ACHN (cell line): ENCODE measurements at regions of chr3 and their contacts with region 1.

Region 1: DNA sequence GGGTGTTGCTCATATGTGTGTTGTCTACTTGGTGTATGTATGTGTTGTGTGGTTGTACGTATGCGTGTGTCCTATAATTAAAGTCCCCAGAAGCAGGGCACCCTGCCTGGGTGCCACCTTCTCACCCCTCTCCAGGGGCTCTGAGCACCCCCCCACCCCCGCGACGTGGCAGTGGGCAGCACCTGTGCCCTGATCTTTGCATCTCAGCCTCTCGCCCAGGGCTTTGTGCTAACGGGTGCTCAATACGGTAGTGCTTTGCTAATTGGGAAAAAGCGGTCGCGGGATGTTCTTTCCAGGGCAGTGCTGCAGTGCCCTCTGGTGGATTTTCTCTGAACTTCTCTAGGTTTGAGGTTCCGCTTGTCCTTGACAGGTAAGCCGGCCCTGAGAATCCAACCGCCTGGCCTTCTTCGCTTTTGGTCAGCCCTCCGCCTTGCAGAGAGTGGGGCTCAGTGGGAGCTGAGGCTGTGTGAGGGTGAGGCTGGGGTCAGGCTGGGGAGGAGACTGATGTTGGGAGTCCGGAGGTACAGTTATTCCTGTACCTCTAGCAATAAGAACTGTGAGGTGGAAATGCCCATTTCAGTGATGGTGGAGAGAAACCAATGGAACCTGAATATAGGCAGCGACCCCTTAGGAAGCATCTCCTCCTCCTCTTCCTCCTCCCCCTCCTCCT is 17.6 kb upstream of the EPHB3 start:
- DNase-seq: peak; percentile 83

Region 2: DNA sequence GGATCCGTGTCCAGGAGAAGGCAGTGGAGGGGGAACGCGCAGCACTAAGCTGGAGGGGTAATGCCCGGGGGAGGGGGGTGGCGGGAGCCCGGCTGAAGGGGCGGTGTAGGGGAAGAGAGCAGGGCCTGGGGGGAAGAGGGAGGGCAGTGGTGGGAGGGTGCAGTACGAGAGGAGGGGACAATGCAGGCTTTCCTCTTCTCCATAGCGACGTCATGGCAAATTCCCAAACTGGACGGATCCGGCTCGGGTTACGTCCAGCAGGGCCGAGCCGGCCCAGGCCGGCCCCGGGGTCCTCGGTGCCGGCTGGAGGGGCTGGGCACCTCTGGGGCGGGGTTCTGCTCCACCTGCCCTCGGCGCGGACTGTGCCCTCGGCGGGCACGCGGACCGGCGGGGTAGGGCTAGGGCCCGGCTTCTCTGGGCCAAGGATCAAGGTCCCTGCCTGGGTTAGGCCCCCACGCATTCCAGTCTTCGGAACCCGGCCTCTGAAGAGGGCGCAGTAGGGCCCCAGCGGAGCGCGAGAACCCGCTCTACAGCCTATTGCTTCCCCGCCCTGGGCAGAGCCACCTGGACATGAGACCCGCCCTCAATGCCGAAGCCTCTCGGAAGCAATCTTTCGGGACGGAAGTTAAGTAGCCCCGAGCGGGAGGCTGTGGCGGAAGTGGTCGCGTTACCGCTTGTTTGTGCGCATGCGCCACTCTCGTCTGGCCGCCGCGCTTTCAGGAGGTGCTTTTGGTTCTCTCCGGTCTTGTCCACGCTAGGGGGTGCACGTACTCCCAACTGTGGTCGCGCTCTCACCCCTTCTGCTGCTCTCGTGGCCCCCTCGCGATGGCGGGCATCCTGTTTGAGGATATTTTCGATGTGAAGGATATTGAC is 181.1 kb before region 1 on chr3:
- in situ Hi-C with region 1: loop called (anchors 25 kb)
- DNase-seq: peak; percentile 95

Region 3: DNA sequence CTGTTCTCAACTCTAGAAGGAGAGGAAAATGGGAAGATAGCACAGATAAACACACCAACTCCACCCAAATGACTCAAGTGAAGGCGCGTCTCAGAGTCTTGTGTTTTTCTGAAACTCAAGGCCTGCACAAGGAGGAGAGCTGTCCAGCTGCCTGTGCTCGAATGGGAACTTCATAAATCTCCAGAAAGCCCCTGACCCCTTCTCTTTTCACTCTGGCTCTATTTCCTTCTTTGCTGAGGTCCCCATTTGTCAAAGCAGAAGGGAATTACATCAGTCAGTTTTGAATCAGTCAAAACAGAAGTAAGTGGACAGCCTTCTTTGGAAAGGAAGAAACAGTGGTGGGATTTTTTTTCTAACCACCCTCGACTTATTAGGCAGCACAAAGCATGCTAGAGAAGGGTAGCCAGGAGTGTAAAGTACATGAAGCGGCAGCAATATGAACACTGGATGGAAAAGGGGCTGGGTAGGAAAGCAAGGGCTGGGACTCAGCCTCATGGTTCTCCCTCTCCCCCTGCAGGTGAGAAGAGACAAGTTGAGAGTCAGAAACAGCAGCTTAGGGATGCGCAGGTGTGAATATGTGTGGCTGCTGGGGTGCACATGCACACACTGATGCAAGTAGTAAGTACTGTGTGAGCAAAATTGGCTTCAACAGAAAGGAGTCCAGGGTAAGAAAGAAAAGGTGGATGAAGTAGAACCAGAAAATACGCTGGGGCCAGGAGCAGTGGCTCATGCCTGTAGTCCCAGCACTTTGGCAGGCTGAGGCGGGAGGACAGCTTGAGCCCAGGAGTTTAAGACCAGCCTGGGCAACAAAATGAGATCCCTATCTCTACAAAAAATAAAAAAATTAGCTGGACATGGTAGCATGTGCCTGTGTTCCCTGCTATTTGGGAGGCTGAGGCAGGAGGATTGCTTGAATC is 204.5 kb after region 1 on chr3:
- in situ Hi-C with region 1: no loop called
- DNase-seq: peak; percentile 5